OCI-LY7 (cell line): ENCODE measurements at regions of chr17 and their contacts with region 1.

Region 1: GRCh38 chr17:76791053-76791980 is 53.4 kb downstream of the MFSD11 start:
- DNase-seq: peak; percentile 80
- H3K4me3 ChIP-seq: peak overlapping the region; percentile 43
- H3K27ac ChIP-seq: peak overlapping the region; percentile 95
- H3K4me1 ChIP-seq: peaks cover 65% of the 10 kb centered on the region
- CTCF ChIP-seq: no peak; the same call in 1 of the 2 replicates

Region 2: GRCh38 chr17:76709077-76709950 is 82.0 kb before region 1 on chr17:
- CTCF ChIA-PET with region 1: no interaction called
- POLR2A ChIA-PET with region 1: no interaction called
- intact Hi-C with region 1: no loop called
- DNase-seq: no peak
- H3K4me3 ChIP-seq: no peak overlapping the region
- H3K27ac ChIP-seq: no peak overlapping the region
- H3K4me1 ChIP-seq: peaks cover 11% of the 10 kb centered on the region
- CTCF ChIP-seq: no peak

Region 3: GRCh38 chr17:76852843-76853242 is 61.5 kb after region 1 on chr17:
- CTCF ChIA-PET with region 1: no interaction called
- POLR2A ChIA-PET with region 1: no interaction called
- intact Hi-C with region 1: no loop called
- DNase-seq: no peak
- H3K4me3 ChIP-seq: no peak overlapping the region
- H3K27ac ChIP-seq: no peak overlapping the region
- H3K4me1 ChIP-seq: peaks cover 33% of the 10 kb centered on the region
- CTCF ChIP-seq: no peak

Region 4: DNA sequence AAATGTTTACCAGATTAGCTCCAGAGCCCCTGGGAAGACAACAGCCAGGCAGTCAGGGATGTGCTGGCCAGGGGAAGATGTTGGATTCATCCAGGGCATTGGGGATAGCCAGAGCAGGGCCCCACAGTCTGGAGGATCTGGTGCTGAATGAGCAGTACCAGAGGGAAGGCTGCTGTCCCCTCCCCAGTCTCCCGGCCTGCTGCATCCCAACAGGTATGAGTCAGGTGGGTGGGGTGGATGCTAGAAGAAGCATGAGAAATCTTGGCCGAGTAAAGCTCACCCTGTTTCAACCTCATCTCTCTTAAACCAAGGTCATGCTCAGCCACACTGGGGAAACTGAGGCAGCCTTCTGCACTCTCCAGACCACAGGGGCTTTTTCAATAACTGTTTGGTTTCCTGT is 277.6 kb after region 1 on chr17:
- CTCF ChIA-PET with region 1: no interaction called
- POLR2A ChIA-PET with region 1: no interaction called
- intact Hi-C with region 1: loop called (anchors 5 kb)
- DNase-seq: no peak
- H3K4me3 ChIP-seq: no peak overlapping the region
- H3K27ac ChIP-seq: no peak overlapping the region
- H3K4me1 ChIP-seq: no peaks in the 10 kb centered on the region
- CTCF ChIP-seq: no peak